Heart right ventricle (tissue), 16 donors: ENCODE measurements at regions of chr6 and their contacts with region 1.

Region 1: DNA sequence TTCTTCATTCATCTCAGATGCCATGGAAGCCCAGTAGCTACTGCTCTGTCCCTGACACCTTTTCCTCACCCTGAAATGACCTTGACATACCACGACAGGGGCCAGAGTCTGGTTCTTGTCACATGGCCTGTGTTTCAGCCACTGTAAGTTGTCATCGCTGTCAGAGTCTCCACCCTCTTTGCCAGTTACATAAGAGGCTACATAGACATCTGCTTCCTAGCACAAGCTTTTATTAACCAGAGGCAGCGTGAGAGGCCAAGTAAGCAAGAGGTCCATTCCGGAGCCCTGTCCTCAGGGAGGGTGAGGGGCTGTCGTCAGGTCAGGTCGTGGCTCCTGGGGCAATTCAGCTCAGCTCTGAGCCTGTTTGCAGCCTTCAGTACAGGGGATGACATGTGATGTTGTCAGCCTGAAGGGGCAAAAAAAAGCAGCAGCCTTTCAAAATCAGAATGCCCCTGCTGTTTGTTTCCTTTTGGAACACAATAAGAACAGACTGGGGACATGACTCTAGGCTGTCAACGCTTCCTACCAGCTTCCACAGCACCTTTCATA is 146.3 kb downstream of the MTFR2 start:
- DNase-seq: peak; percentile 76 to 89
- ATAC-seq: peak; percentile 95 to 99 (median 97)
- H3K4me3 ChIP-seq: peak overlapping the region in 3 of 10 donors; percentile 7 to 14 (median 13)
- H3K27ac ChIP-seq: peak overlapping the region; percentile 54 to 92 (median 84)
- H3K4me1 ChIP-seq: peaks cover 25 to 81% (median 55%) of the 10 kb centered on the region in 9 donors
- H3K27me3 ChIP-seq: no peaks in the 10 kb centered on the region
- CTCF ChIP-seq: no peak

Region 2: DNA sequence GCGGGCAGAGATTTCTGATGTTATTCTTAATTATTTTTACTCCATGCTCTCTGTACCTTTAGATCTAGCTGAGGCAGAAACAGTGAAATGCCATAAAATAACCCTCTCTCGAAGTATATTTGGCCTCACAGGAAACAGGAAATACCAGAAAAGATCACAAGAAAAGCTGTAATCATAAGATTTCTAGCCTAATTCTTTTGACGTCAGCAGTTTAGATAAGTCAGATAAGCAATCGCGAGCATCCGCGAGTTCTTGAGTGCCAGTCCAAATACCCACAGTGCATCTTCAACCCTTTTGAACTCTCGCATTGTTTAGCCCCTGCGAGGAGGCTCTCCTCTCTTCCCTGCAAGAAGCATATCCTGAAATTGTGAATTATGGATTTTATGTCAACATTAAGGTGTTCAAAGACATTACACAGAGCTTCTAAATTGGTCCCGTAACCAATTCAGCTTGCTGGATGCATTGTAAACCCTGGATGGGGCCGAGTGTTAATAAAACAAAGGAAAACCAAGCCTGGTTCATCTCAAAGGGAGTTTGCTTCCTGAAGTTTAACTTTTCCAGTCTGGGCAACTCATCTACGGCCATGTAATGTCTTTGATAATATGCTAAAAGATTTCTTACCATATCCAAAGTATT is 52.6 kb before region 1 on chr6:
- intact Hi-C with region 1: loop called in 1 of 10 experiments (anchors 5 kb)
- DNase-seq: peak in 1 of 2 donors; percentile 26
- ATAC-seq: peak; percentile 36 to 86 (median 71)
- H3K4me3 ChIP-seq: peak overlapping the region in 6 of 10 donors; percentile 6 to 34 (median 12)
- H3K27ac ChIP-seq: peak overlapping the region; percentile 25 to 90 (median 79)
- H3K4me1 ChIP-seq: peaks cover 11 to 59% (median 32%) of the 10 kb centered on the region in 9 donors
- H3K27me3 ChIP-seq: no peaks in the 10 kb centered on the region
- CTCF ChIP-seq: no peak

Region 3: DNA sequence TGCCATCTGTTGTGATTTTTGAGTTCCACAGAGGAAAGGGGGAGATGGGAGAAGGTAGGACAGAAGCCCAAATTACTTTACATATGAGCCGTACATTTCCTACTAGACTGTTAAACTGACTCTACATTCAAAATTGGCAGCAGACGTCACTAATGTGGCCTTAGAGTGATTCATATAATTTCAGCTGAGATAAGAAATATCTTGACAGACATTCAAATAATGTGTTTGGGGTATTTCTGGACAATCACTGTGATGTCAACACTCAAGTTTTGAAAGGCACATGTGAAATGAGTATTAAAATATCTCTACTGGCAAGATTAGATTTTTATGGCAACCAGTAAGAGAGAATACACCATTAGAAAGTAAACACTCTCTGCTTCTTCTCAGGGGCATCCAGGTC is 42.3 kb after region 1 on chr6:
- intact Hi-C with region 1: loop called in 1 of 10 experiments (anchors 5 kb)
- DNase-seq: no peak
- ATAC-seq: peak in 7 of 8 donors; percentile 40 to 77 (median 63)
- H3K4me3 ChIP-seq: no peak overlapping the region
- H3K27ac ChIP-seq: peak overlapping the region; percentile 2 to 65 (median 54)
- H3K4me1 ChIP-seq: peaks cover 3 to 53% (median 20%) of the 10 kb centered on the region in 9 donors
- H3K27me3 ChIP-seq: no peaks in the 10 kb centered on the region
- CTCF ChIP-seq: no peak